K562 (cell line): ENCODE measurements at regions of chr5 and their contacts with region 1.

Region 1: DNA sequence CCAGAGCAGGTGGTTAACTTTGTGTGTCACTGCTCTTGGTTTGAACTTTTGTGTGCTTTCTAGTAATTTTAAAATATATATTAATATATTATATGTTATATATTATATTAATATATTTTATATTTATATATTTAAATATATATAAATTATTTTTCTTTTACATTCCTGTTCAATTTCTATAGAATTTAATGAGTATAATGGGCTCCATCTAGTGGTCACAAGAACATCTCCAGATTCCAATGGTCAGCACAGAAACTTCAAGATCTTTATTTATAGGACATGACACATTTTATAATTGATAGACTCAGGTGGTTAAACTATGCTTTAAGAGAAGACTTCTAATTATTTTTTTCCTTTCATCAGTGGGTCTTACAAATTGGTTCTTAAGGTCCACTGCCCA is 39.1 kb downstream of the COL23A1 start:
- DNase-seq: peak; percentile 25 to 34 (median 28)
- ATAC-seq: no peak
- H3K4me3 ChIP-seq: no peak overlapping the region
- H3K27ac ChIP-seq: no peak overlapping the region
- H3K4me1 ChIP-seq: peaks cover 5 to 14% of the 10 kb centered on the region in 2 experiments; a peak in 4 of 5 replicates
- H3K27me3 ChIP-seq: peaks cover 0 to 14% of the 10 kb centered on the region in 2 experiments; a peak in 3 of 5 replicates
- CTCF ChIP-seq: peak in 2 of 3 experiments; percentile 17 to 62; a peak in 3 of 6 replicates
- EP300 ChIP-seq: no peak
- POLR2A ChIP-seq: no peak
- RAD21 ChIP-seq: peak; percentile 52 to 57

Region 2: DNA sequence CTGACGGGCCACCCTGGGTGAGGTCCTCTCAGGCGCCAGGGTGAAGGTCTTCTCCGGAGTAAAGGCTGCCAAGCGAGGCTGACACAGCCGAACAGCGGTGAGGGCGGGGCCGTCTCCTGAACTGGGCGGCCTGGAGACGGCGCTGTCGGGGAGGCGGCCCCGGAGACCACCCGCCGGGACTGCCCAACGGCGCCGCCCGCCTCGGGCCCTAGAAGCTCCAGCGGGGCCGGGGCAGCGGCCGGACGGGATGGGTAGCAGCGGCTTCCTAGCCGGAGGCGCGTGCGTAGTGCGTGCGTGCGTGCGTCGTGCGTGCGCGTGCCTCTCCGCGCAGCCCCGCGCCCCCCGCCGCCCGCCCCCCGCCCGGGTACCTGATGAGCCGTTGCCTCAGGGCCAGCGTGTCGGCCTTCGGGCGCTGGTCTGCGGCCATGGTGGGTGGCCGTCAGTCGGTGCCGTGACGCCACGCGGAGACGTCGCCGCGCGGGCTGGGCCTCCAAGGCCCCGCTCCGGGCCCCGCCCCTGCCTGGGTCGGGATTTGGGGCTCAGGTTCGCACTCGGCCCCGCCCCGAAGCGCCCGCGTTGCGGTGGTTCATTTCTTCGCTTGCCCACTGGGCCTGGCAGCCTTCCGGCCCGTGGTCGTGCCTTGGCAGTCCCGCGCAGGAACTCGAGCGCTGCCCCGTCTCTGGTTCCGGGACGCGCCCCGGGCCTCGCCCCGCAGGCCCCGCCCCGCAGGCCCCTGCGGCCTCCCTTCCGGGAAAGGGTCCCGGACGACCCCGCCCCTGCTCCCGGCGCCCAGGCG is 318.7 kb before region 1 on chr5 and contains the start of gene PHYKPL:
- CTCF ChIA-PET with region 1: no interaction called
- POLR2A ChIA-PET with region 1: no interaction called
- in situ Hi-C with region 1: no loop called
- intact Hi-C with region 1: loop called (anchors 5 kb)
- DNase-seq: peak; percentile 77 to 92 (median 86)
- ATAC-seq: peak; percentile 79
- H3K4me3 ChIP-seq: peak within 1 kb of the TSS; percentile 93
- H3K27ac ChIP-seq: peak within 1 kb of the TSS; percentile 87
- H3K4me1 ChIP-seq: peaks cover 31 to 39% of the 10 kb centered on the region in 2 experiments
- H3K27me3 ChIP-seq: no peaks in the 10 kb centered on the region
- CTCF ChIP-seq: peak in 2 of 3 experiments; percentile 14 to 61; a peak in 2 of 6 replicates
- EP300 ChIP-seq: no peak
- POLR2A ChIP-seq: peak; percentile 76
- RAD21 ChIP-seq: no peak
- polyA plus RNA-seq, gene PHYKPL: 4.7 to 6.5 TPM

Region 3: GRCh38 chr5:178279725-178280438 is 271.2 kb before region 1 on chr5:
- CTCF ChIA-PET with region 1: no interaction called
- POLR2A ChIA-PET with region 1: no interaction called
- in situ Hi-C with region 1: no loop called
- intact Hi-C with region 1: loop called (anchors 5 kb)
- DNase-seq: peak; percentile 85 to 89 (median 87)
- ATAC-seq: peak; percentile 99
- H3K4me3 ChIP-seq: no peak overlapping the region
- H3K27ac ChIP-seq: no peak overlapping the region
- H3K4me1 ChIP-seq: peaks cover 0 to 12% of the 10 kb centered on the region in 2 experiments; a peak in 3 of 5 replicates
- H3K27me3 ChIP-seq: peaks cover 12 to 64% of the 10 kb centered on the region in 2 experiments; a peak in 4 of 5 replicates
- CTCF ChIP-seq: peak; percentile 96 to 97 (median 96)
- EP300 ChIP-seq: no peak
- POLR2A ChIP-seq: no peak
- RAD21 ChIP-seq: peak; percentile 93 to 98

Region 4: DNA sequence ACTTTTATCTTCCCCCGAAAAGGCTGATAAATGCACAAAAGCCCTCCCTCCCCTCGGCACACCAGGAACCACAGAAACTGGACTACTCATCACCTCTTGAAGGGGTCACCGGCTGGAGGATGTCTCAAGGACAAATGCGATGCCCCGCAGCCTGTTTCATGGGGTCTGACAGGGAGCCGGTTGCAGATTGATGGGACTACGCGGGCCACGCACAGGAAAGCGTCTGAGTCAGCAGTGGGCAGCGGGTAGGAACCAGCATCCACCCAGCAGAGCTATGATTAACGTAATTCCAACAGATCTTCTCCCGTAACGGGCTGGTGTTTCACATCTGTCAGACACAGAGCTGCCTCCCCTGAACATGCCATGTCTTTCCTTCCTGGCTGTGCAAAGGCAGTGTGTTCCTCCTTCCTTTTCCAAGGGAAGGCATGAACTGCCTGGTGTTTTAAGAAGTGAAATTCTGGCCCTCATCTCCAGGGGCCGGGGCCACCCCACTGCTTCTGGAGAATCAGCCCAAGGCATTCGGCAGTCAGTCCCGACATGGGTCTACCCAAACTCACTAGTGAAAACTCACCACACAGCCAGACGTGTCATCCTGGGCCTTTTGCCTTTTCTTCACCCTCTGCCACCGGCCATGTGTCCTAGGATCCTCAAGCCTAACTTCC is 174.0 kb before region 1 on chr5:
- CTCF ChIA-PET with region 1: no interaction called
- POLR2A ChIA-PET with region 1: no interaction called
- in situ Hi-C with region 1: no loop called
- intact Hi-C with region 1: loop called (anchors 5 kb)
- DNase-seq: no peak
- ATAC-seq: no peak
- H3K4me3 ChIP-seq: no peak overlapping the region
- H3K27ac ChIP-seq: no peak overlapping the region
- H3K4me1 ChIP-seq: no peaks in the 10 kb centered on the region
- H3K27me3 ChIP-seq: peaks cover 28 to 77% of the 10 kb centered on the region in 2 experiments
- CTCF ChIP-seq: no peak
- EP300 ChIP-seq: no peak
- POLR2A ChIP-seq: no peak
- RAD21 ChIP-seq: no peak

Region 5: GRCh38 chr5:178416919-178417318 is 134.1 kb before region 1 on chr5:
- CTCF ChIA-PET with region 1: no interaction called
- POLR2A ChIA-PET with region 1: no interaction called
- in situ Hi-C with region 1: no loop called
- intact Hi-C with region 1: loop called (anchors 2 kb)
- DNase-seq: no peak
- ATAC-seq: no peak
- H3K4me3 ChIP-seq: no peak overlapping the region
- H3K27ac ChIP-seq: no peak overlapping the region
- H3K4me1 ChIP-seq: peaks cover 9 to 11% of the 10 kb centered on the region in 2 experiments
- H3K27me3 ChIP-seq: peaks cover 7 to 42% of the 10 kb centered on the region in 2 experiments; a peak in 4 of 5 replicates
- CTCF ChIP-seq: no peak
- EP300 ChIP-seq: no peak
- POLR2A ChIP-seq: no peak
- RAD21 ChIP-seq: no peak

Region 6: DNA sequence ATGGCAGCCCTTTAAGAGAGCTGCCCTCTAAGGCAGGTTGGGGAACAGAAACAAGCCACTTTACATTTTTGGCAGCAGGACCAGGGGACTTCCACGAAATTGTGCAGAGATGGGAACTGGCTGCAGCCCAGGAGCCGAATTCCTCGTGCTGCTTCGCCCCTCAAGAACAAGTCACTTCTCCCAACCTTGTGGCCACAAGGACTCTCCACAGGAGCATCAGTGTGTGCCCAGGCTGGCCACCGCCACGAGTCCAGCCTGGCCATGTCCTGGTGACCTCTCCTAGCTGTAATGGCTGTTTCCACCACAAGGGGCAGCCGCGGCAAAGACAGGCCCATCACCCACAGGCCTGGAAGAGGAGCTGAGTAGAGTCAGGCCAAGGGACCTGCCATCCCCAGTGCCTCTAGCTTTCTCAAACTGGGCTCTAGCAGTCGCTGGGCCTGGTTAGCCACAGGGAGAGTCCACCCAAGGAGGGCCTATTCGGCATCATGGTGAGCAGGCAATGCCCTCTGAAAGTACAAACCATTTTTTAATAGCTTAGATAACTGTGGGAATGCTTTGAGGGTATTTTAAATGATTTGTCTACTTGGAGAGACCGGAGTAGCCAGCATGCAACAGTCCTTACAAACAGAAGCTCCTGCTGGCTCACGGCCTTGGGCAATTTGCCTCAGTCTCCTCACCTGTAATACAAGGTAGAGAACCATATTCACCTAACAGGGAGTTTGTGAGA is 89.9 kb before region 1 on chr5:
- CTCF ChIA-PET with region 1: no interaction called
- POLR2A ChIA-PET with region 1: no interaction called
- in situ Hi-C with region 1: no loop called
- intact Hi-C with region 1: loop called (anchors 2 kb)
- DNase-seq: peak; percentile 83 to 85 (median 84)
- ATAC-seq: peak; percentile 100
- H3K4me3 ChIP-seq: no peak overlapping the region
- H3K27ac ChIP-seq: no peak overlapping the region
- H3K4me1 ChIP-seq: peaks cover 0 to 10% of the 10 kb centered on the region in 2 experiments; a peak in 3 of 5 replicates
- H3K27me3 ChIP-seq: peaks cover 0 to 6% of the 10 kb centered on the region in 2 experiments; a peak in 1 of 5 replicates
- CTCF ChIP-seq: peak; percentile 85 to 95 (median 87)
- EP300 ChIP-seq: no peak
- POLR2A ChIP-seq: no peak
- RAD21 ChIP-seq: peak; percentile 65 to 68